HEK293 (cell line): ENCODE measurements at regions of chr19 and their contacts with region 1.

Region 1: GRCh38 chr19:5031231-5032100 is 62.6 kb downstream of the KDM4B start:
- H3K4me3 ChIP-seq: no peak overlapping the region
- H3K27ac ChIP-seq: no peak overlapping the region
- H3K4me1 ChIP-seq: peaks cover 2% of the 10 kb centered on the region; the same call in 1 of the 2 replicates
- CTCF ChIP-seq: peak; percentile 98

Region 2: GRCh38 chr19:4873930-4874329 is 157.5 kb before region 1 on chr19:
- CTCF ChIA-PET with region 1: interaction called, 22 read pairs
- POLR2A ChIA-PET with region 1: interaction called, 3 read pairs
- H3K4me3 ChIP-seq: no peak overlapping the region
- H3K27ac ChIP-seq: no peak overlapping the region
- H3K4me1 ChIP-seq: no peaks in the 10 kb centered on the region
- CTCF ChIP-seq: no peak

Region 3: DNA sequence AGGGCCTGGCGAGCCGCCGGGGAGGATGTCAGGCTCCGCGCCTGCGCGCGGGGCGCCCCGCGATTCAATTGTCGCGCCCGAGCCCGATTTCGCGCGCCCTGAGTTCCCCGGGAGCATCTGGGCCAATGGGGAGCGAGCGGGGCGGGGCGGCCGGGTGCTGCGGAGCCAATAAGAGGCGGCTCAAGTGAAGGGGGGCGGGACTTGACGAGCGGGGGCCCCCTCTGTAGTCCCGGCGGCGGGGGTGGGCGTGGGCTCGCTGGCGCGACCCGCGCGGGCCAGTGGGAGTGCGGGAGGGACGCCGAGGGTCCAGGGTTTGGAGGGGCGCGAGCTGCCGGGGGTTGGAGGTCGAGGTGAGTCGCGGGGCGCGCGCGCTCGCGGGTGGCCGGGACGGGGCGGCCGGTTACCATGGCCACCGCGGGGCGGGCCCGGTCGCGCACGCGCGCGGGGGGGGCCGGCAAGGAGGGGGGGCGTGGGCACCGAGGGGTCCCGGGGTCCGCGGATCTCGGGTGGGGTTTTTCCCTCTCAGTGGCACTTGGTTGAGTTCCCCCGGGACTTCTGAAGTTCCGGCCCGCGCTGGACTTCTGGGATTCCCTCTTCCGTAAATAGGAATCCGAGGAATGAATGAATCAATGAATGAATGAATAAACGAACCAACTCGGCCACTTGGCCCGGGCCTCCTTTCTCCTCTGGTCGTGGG is 121.4 kb before region 1 on chr19:
- CTCF ChIA-PET with region 1: interaction called, 19 read pairs
- POLR2A ChIA-PET with region 1: no interaction called
- H3K4me3 ChIP-seq: peak overlapping the region; percentile 77
- H3K27ac ChIP-seq: peak overlapping the region; percentile 92
- H3K4me1 ChIP-seq: peaks cover 13% of the 10 kb centered on the region
- CTCF ChIP-seq: no peak

Region 4: DNA sequence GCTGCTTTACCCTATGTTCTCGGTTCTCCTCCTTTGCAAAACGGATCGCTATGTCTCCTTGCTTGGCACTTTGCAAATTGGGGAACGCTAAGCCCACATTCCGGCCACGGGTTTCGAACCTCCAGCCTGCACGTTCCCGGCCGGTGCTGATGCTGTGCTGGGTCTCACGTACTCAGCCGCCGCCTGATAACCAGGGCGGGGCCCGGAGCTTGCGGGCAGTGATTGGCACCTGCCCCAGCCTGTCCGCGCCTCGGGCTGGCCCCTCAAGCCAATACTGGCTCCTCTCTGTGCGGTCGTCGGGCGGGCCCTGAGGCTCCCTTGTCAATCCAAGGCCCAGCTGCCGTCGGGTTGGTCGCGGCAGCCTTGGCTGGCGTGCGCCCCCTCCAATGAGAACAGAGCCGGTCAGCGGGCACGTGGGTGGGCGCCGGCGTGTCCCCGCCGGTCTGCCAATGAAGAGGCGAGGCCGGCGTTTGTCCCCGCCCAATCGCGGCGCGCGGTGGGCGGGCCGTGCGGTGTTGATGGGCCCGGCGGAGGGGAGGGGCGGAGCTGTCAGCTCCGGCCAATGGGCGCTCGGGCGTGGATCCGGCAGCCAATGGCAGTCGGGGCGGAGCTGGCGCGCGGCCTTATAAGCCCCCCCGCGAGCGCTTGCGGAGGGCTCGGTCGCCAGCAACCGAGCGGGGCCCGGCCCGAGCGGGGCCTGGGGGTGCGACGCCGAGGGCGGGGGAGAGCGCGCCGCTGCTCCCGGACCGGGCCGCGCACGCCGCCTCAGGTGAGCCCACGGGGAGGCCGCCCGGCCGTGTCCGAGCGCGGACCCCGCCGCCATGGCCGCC is 62.8 kb before region 1 on chr19 and contains the start of gene KDM4B:
- CTCF ChIA-PET with region 1: interaction called, 32 read pairs
- POLR2A ChIA-PET with region 1: interaction called, 8 read pairs
- H3K4me3 ChIP-seq: peak within 1 kb of the TSS; percentile 71
- H3K27ac ChIP-seq: peak within 1 kb of the TSS; percentile 79; the same call in 1 of the 2 replicates
- H3K4me1 ChIP-seq: peaks cover 6% of the 10 kb centered on the region
- CTCF ChIP-seq: no peak

Region 5: GRCh38 chr19:5001615-5002014 is 29.9 kb before region 1 on chr19:
- CTCF ChIA-PET with region 1: interaction called, 30 read pairs
- POLR2A ChIA-PET with region 1: interaction called, 3 read pairs
- H3K4me3 ChIP-seq: no peak overlapping the region
- H3K27ac ChIP-seq: no peak overlapping the region
- H3K4me1 ChIP-seq: no peaks in the 10 kb centered on the region
- CTCF ChIP-seq: 0 out of 2 replicates have a peak, but pooled peaks have one; percentile 34

Region 6: GRCh38 chr19:5048091-5048726 is 16.7 kb after region 1 on chr19:
- CTCF ChIA-PET with region 1: interaction called, 26 read pairs
- POLR2A ChIA-PET with region 1: no interaction called
- H3K4me3 ChIP-seq: no peak overlapping the region
- H3K27ac ChIP-seq: no peak overlapping the region
- H3K4me1 ChIP-seq: peaks cover 18% of the 10 kb centered on the region
- CTCF ChIP-seq: peak; percentile 99